ENCODE measurements at regions of chr1 and their contacts with region 1.

Region 1: DNA sequence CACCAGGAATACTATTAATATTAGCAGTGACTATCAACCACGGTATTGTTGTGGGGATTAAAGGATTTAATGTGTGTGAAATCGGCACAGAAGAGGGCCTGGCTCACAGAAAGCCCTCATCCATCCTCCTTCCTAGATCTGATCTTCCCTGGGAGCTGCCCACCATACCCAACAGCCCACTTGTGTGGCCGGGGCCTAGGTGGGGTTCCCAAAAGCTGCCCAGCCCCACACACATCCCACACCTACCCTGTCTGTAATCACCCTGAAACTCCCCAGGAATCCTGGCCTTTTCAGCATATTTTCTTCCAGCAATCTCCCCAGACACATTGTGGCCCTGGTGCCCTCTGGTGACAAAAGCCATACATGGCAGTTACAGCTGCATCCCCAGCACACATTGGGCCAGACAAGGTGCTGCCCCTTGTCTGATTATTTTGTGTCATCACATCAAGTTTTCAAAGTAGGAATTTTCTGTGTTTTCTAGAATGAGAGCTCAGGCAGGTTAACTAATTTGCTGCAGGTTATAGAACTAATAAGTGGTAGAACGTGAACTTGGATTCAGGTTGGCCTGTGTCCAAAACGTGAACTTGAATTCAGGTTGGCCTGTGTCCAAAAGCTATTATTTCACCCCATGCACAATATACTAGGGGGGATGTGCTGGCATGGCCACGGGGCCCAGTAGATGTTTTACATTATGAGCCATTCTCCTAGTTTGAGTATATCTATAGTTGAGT is 5.3 kb upstream of the SLC6A9 start:
- DNase-seq: peak; percentile 77
- ATAC-seq: peak; percentile 72
- H3K4me3 Mint-ChIP-seq: no peak overlapping the region
- H3K27ac Mint-ChIP-seq: no peak overlapping the region
- H3K4me1 Mint-ChIP-seq: peaks cover 7% of the 10 kb centered on the region
- H3K27me3 Mint-ChIP-seq: peaks cover 7% of the 10 kb centered on the region

Region 2: GRCh38 chr1:43991476-43992231 is 44.9 kb before region 1 on chr1 and contains the start of gene CCDC24:
- CTCF ChIA-PET with region 1: interaction called, 17 read pairs
- DNase-seq: peak; percentile 83
- ATAC-seq: peak; percentile 86
- H3K4me3 Mint-ChIP-seq: peak within 1 kb of the TSS; percentile 83
- H3K27ac Mint-ChIP-seq: peak within 1 kb of the TSS; percentile 82
- H3K4me1 Mint-ChIP-seq: peaks cover 16% of the 10 kb centered on the region
- H3K27me3 Mint-ChIP-seq: no peaks in the 10 kb centered on the region
- total RNA-seq, gene CCDC24: 1.3 to 1.5 TPM

Region 3: GRCh38 chr1:44012941-44013609 is 23.5 kb before region 1 on chr1:
- CTCF ChIA-PET with region 1: interaction called, 115 read pairs
- DNase-seq: no peak
- ATAC-seq: no peak
- H3K4me3 Mint-ChIP-seq: no peak overlapping the region
- H3K27ac Mint-ChIP-seq: no peak overlapping the region
- H3K4me1 Mint-ChIP-seq: peaks cover 4% of the 10 kb centered on the region
- H3K27me3 Mint-ChIP-seq: no peaks in the 10 kb centered on the region

Region 4: DNA sequence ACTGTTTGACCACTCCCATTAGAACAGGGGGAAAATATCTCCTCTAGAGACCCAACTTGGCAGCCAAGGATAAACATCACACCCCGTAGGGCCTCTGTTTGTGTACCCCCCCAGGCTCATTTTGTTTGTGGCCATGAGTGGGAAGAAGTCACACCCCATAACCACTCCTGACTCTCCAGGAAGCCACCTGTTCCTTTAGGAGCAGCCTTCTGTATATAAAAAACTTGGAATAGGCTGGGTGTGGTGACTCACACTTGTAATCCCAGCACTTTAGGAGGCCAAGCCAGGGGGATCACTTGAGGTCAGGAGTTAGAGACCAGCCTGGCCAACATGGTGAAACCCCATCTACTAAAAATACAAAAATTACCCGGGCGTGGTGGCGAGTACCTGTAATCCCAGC is 23.4 kb after region 1 on chr1:
- CTCF ChIA-PET with region 1: no interaction called
- DNase-seq: no peak
- ATAC-seq: no peak
- H3K4me3 Mint-ChIP-seq: no peak overlapping the region
- H3K27ac Mint-ChIP-seq: no peak overlapping the region
- H3K4me1 Mint-ChIP-seq: no peaks in the 10 kb centered on the region
- H3K27me3 Mint-ChIP-seq: peaks cover 33% of the 10 kb centered on the region